GM13977 (cell line): ENCODE measurements at regions of chrX and their contacts with region 1.

Region 1: GRCh38 chrX:140071037-140071436 is 105.7 kb upstream of the CXorf66 start:
- DNase-seq: no peak
- CTCF ChIP-seq: no peak

Region 2: GRCh38 chrX:139508099-139508498 is 562.9 kb before region 1 on chrX:
- in situ Hi-C with region 1: no loop called
- DNase-seq: no peak
- CTCF ChIP-seq: no peak

Region 3: DNA sequence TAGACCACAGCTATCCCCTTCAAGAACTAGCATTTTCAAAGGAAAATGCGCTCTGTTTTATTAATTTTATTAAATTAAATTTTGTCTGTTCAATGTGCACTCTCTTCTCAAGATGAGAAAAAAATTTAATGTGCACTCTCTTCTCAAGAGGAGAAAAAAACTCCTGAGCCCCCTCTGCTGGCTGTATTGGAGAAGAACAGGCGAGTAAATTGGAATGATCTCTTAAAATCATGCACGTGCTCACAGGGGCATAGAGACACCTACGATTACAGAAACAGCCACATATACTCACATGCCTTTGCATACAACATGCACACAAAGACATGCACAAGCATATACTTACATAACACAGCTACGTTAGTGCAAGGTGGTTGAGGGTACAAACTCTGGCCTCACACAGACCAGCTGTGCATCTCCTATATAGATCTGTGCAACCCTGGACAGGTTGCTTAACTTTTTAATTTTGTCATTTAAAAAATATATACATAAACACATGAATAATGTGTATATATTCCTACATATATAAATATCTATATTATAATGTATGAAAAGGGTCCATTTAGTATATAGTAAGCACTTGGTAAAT is 70.5 kb after region 1 on chrX:
- in situ Hi-C with region 1: loop called (anchors 5 kb)
- DNase-seq: peak; percentile 58
- CTCF ChIP-seq: peak; percentile 61